Activated T-helper 1 cell treated with anti-CD3 and anti-CD28 coated beads, Interleukin-12 subunit alpha, Interleukin-12 subunit beta, Interleukin-2, Interleukin-4 antibody, amounts not matched to agents 30 ng/mL and 10 ng/mL and 1 ng/mL, durations not matched to agents 14 hours and 24 hours and 36 hours (primary cell): ENCODE measurements at regions of chr7 and their contacts with region 1.

Region 1: DNA sequence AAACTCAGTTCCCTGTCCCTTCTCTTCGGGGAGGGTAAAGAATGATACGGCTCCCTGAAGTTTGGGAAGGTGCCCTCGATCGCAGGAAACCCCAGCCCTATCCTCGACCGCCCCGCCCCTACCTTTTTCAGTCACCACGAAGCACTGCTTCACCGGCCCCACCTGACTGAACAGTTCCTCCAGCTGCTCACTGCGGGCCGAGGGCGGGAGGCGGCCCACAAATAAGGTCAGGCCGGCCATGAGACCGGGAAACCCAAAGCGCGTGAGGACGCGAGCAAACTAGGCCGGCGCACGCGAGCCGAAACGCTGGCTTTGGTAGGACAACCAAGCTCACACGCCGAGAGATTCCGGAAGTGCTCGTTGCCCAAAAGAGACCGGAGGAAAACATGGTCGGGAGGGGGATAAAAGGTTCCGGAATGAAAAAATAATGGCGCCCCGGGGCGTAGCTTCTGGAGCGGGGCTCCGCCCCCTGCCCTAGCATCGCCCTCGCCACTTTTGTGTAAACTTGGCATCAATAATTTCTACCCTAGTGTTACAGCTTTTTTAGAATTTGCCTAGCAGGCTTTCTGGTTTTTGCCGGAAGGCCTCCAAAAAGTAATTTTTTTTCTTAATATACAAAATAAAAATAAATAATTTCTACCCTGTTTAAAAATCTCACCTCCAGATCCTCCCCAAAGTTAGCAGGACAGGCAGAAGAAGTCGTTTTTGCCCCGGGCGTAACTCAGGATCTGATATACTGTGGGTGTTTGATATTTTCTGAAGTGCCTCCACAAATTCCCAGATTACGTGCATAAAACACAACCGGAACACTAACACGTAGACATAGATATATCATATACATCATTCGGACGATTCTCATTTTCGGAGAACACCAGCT is at the start of gene RBM28:
- DNase-seq: peak; percentile 83
- H3K4me3 Mint-ChIP-seq: peak within 1 kb of the TSS; percentile 95
- H3K27ac Mint-ChIP-seq: peak within 1 kb of the TSS; percentile 89
- H3K4me1 Mint-ChIP-seq: peaks cover 30% of the 10 kb centered on the region
- H3K27me3 Mint-ChIP-seq: peaks cover 16% of the 10 kb centered on the region
- total RNA-seq, gene RBM28: 77.0 and 80.1 TPM in 2 replicates

Region 2: DNA sequence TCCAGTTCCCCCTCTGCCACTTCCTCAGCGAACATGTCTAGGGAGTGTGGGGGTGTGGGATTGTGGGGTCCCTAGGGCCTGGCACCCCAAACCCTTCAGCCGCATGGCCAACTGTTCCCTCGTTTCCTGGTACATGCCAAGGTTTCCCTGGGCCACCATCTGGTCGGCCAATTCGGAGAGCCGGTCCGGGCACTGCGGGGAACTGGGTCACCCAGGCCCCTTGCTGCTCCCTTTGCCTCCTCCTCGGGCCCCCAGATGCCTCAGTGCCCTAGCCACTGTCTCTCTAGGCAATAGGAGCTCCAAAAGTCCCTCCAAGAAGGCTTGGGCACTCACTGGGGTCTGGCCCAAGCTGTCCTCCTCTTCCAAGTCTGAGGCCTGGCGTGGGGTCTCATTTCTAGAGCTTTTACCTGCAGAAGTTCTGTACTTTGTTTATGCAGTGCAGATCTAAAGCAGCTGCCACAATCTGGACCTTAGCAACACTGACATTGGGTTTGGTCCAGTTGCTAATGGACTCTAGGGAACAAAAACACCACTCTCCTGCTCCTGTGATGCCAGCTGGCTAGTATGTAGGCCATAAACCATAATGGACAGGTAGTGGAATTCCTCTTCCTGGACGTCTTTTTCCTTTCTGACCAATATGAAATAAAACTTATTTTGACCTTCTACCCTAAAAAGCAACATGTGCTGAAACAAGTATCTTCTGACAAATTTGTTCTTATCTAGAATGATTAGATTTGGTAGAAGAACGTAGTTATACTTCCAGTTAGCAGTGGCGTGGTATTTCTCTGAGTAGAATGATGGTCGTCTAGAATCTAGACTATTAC is 485.5 kb before region 1 on chr7:
- intact Hi-C with region 1: loop called (anchors 5 kb)
- DNase-seq: no peak
- H3K4me3 Mint-ChIP-seq: peak overlapping the region; percentile 30
- H3K27ac Mint-ChIP-seq: peak overlapping the region; percentile 52
- H3K4me1 Mint-ChIP-seq: peaks cover 67% of the 10 kb centered on the region
- H3K27me3 Mint-ChIP-seq: peaks cover 5% of the 10 kb centered on the region

Region 3: DNA sequence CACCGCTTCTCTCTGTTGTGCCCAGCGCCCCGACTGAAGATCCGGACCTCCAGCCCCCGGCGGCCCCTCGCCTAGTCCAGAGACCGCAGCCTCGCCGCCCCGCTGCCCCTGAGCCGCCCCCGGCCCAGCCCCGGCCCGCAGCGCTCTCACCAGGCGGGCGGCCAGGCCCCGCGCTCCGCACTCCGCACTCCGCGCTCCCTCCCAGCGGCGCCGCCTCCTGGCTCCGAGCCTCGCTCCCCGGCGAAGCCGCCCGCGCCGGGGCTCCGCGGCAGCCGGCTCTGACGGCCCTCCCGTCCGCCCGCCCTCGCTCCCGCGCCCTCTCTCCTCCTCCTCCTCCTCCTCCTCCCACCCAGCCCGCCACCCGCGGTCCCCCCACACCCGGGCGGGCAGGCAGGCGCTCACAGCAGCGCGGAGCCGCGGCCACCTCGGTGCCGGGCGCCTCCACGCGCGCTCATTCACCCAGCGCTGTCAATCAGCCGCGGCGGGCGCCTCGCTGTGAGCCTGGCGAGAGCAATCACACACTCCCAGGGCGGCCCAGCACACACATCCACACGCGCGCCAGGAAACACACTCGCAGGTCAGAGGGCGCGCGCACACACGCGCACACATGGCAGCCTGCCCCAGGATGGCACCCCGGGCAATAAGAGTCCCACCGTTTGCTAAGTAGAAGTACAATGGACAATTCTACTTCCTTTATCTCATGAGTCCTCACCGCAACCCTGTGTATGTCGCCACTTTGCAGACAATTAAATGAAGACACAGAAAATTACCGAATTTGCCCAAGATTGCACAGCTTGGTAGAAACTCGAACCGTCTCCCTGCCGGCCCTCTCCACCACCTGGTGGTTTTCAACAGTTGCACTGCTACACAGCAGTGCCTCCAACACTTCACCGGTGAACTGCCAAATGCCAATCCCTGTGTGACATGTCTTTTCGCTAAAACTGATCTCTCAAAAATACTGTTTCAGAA is 17.9 kb after region 1 on chr7 and contains the start of gene PRRT4:
- intact Hi-C with region 1: loop called (anchors 2 kb)
- DNase-seq: no peak
- H3K4me3 Mint-ChIP-seq: peak within 1 kb of the TSS; percentile 77
- H3K27ac Mint-ChIP-seq: no peak within 1 kb of the TSS
- H3K4me1 Mint-ChIP-seq: peaks cover 21% of the 10 kb centered on the region
- H3K27me3 Mint-ChIP-seq: peaks cover 74% of the 10 kb centered on the region
- total RNA-seq, gene PRRT4: 0.10 and 0.21 TPM in 2 replicates

Region 4: DNA sequence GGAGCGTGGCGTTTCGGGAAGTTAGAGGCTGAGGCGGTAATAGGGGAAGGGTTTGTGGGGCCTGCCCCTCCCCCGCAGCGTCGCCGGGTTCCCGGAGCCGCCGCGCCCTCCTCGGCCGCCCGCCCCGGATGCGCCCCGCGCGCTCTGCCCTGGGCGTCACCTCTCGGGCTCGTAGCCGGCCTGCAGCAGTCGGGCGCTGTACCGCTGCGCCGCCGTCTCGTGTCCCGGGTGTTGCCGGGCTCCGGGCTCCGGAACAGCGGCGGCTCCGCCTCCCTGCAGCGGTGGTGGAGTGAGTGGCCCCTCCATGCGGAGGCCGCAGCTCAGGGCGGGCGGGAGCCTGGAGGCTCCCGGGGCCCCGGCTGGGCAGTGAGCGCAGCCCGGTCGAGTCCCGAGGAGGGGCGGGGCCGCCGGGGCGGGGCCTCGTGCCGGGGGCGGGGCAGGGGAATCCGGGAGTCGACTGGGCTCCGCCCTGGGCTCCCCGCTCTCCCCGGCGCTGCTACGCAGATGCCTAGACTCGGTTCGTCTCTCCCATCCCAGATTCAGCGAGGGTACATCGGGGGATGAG is 65.9 kb after region 1 on chr7 and contains the start of gene IMPDH1:
- intact Hi-C with region 1: loop called (anchors 1 kb)
- DNase-seq: peak; percentile 82
- H3K4me3 Mint-ChIP-seq: peak within 1 kb of the TSS; percentile 93
- H3K27ac Mint-ChIP-seq: peak within 1 kb of the TSS; percentile 80
- H3K4me1 Mint-ChIP-seq: peaks cover 36% of the 10 kb centered on the region
- H3K27me3 Mint-ChIP-seq: peaks cover 25% of the 10 kb centered on the region
- total RNA-seq, gene IMPDH1: 91.7 and 95.8 TPM in 2 replicates

Region 5: GRCh38 chr7:128447941-128448564 is 104.3 kb after region 1 on chr7:
- intact Hi-C with region 1: no loop called
- DNase-seq: no peak
- H3K4me3 Mint-ChIP-seq: no peak overlapping the region
- H3K27ac Mint-ChIP-seq: no peak overlapping the region
- H3K4me1 Mint-ChIP-seq: peaks cover 47% of the 10 kb centered on the region
- H3K27me3 Mint-ChIP-seq: peaks cover 23% of the 10 kb centered on the region

Region 6: DNA sequence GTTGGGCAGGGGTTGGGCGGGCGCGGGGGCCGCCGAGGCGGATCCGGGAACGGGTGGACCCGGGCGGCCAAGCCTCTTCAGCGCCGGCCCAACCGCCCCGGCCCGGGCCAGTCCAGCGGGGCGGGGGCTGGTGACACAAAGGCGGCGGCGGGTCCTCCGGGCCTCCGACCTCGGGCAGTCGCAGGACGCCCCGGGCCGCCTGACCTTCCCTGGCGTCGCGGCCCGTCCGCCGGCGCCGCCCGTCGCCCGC is 187.0 kb after region 1 on chr7:
- intact Hi-C with region 1: loop called (anchors 10 kb)
- DNase-seq: no peak
- H3K4me3 Mint-ChIP-seq: no peak overlapping the region
- H3K27ac Mint-ChIP-seq: no peak overlapping the region
- H3K4me1 Mint-ChIP-seq: peaks cover 40% of the 10 kb centered on the region
- H3K27me3 Mint-ChIP-seq: no peaks in the 10 kb centered on the region